CD4-positive, alpha-beta memory T cell (primary cell): ENCODE measurements at regions of chr16 and their contacts with region 1.

Region 1: DNA sequence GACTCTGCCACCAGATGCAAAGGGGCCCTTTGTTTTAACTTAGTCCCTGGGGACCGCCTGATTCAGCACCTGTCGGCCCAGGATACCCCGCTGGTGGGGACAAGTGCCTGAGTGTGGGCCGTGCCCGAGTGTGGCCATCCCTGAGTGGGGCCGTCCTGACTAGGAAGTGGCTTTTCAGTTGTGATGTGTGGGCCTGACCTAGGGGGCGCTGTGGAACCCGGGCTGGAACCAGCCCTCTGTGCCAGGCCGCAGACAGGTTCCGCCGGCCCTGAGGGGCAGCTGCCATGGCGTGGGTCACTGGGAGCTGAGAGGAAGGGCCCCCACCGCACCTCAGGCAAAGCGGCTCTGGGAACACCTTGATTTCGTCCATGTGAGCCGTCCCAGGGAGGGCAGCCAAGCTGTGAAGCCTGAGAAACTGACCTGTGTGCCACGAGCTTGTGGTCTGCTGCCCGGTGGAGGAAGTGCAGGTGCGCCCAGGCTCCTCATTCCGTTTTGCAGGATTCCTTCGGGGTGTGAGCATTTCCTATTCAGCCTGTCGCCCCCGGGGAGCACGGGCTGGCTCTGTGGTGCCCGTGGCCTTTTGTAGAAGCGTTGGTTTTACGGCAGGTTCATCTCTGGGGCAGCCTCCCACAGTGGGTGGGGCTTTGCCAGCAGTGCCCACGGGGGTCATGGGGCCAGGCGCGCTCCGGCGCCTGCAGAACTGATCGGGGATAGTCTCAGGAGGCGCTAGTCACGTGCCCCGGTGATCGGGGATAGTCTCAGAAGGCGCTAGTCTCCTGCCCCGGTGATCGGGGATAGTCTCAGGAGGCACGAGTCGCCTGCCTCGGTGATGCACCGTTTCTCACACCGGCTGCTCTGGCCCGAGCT is 5.3 kb downstream of the RPL13 start:
- DNase-seq: peak in 3 of 5 donors; percentile 39 to 69 (median 46)
- H3K4me3 ChIP-seq: no peak overlapping the region
- H3K4me3 Mint-ChIP-seq: peak overlapping the region; percentile 59 to 87 (median 74)
- H3K27ac ChIP-seq: peak overlapping the region; percentile 32
- H3K27ac Mint-ChIP-seq: peak overlapping the region in 6 of 7 donors; percentile 48 to 98 (median 67)
- H3K4me1 ChIP-seq: peaks cover 52% of the 10 kb centered on the region
- H3K4me1 Mint-ChIP-seq: peaks cover 32 to 51% (median 43%) of the 10 kb centered on the region in 4 donors
- H3K27me3 ChIP-seq: no peaks in the 10 kb centered on the region
- H3K27me3 Mint-ChIP-seq: no peaks in the 10 kb centered on the region

Region 2: GRCh38 chr16:89498839-89499238 is 66.9 kb before region 1 on chr16:
- CTCF ChIA-PET with region 1: no interaction called
- POLR2A ChIA-PET with region 1: no interaction called
- intact Hi-C with region 1: no loop called
- DNase-seq: no peak
- H3K4me3 ChIP-seq: no peak overlapping the region
- H3K4me3 Mint-ChIP-seq: no peak overlapping the region
- H3K27ac ChIP-seq: no peak overlapping the region
- H3K27ac Mint-ChIP-seq: peak overlapping the region in 1 of 7 donors; percentile 36
- H3K4me1 ChIP-seq: no peaks in the 10 kb centered on the region
- H3K4me1 Mint-ChIP-seq: peaks cover 0 to 13% (median 5%) of the 10 kb centered on the region in 4 donors
- H3K27me3 ChIP-seq: no peaks in the 10 kb centered on the region
- H3K27me3 Mint-ChIP-seq: no peaks in the 10 kb centered on the region

Region 3: DNA sequence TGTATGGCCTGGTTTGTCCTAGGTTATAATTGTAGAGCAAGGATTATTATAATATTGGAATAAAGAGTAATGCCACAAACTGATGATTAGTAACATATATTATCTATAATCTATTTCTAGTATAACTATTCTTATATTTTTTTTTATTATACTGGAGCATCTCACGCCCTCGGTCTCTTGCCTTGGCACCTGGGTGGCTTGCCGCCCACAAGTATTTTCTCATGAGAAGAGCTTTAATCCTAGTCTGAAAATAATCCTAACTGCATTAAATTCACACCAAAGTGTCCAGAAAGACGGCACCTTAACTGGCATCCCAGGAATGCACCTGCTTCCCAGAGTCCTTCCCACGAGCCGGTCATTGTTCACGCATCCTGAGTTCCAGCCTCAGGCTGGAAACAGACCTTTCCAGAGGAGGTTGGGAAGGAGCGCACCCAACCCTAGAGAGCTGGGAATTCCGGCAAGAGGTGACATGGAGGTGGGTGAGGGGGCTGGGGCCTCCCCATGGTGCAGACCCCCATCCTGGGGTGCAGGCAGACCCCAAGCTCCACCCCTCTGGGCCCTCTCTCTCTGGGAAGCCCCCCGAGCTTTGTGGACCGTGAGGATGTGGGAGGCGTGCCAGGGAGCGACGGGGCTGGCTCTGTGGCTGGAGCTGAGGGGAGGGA is 75.8 kb after region 1 on chr16:
- CTCF ChIA-PET with region 1: no interaction called
- POLR2A ChIA-PET with region 1: no interaction called
- intact Hi-C with region 1: loop called (anchors 2 kb)
- DNase-seq: no peak
- H3K4me3 ChIP-seq: no peak overlapping the region
- H3K4me3 Mint-ChIP-seq: peak overlapping the region in 3 of 8 donors; percentile 67 to 78 (median 71)
- H3K27ac ChIP-seq: no peak overlapping the region
- H3K27ac Mint-ChIP-seq: peak overlapping the region in 1 of 7 donors; percentile 33
- H3K4me1 ChIP-seq: peaks cover 7% of the 10 kb centered on the region
- H3K4me1 Mint-ChIP-seq: peaks cover 5 to 10% (median 7%) of the 10 kb centered on the region in 4 donors
- H3K27me3 ChIP-seq: no peaks in the 10 kb centered on the region
- H3K27me3 Mint-ChIP-seq: no peaks in the 10 kb centered on the region